Caco-2 (cell line): ENCODE measurements at regions of chr6 and their contacts with region 1.

Region 1: GRCh38 chr6:63458480-63459115 is 113.7 kb upstream of the LOC128125822 start:
- DNase-seq: peak in 1 of 2 experiments; percentile 70
- H3K4me3 ChIP-seq: no peak overlapping the region
- H3K4me3 Mint-ChIP-seq: peak overlapping the region; percentile 52
- H3K27ac Mint-ChIP-seq: peak overlapping the region; percentile 66
- H3K4me1 ChIP-seq: peaks cover 36% of the 10 kb centered on the region
- H3K4me1 Mint-ChIP-seq: peaks cover 22% of the 10 kb centered on the region
- H3K27me3 ChIP-seq: no peaks in the 10 kb centered on the region
- H3K27me3 Mint-ChIP-seq: no peaks in the 10 kb centered on the region
- CTCF ChIP-seq: no peak

Region 2: DNA sequence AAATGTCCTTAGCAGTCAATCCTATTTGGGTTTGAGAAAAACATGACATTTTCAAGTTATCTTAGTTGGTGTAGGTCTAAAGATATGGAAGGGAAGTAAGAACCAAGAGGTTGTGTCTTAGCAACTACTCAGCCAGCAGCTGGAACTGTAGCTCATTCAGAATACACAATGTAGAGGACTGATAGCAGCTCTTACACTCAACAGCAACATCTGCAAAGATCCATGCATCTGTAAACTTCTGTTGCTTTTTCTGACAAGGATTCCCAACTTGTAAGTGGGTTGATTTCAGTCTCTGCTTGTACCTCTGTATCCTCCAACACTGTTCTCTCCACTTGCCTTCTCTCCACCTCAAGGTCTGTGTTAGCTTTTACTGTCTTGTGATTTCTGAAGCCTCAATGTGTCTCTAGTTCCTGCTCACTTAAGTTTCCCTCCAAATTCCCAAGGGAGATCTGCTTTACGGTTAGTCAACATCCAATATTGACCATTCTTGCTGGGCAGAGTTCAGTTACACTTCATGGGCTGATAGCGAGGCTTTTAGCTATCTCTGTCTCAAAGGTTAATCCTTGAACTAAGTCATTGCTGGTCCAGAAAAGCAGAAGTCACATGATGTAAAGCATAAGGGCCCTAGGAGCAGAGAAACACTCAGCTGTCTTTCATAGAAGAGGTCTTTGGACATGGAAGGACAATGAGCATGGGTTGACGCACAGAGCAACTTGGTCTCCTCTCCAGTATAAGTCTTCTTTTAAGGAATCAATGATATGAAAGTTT is 67.2 kb before region 1 on chr6:
- CTCF ChIA-PET with region 1: no interaction called
- POLR2A ChIA-PET with region 1: no interaction called
- intact Hi-C with region 1: loop called (anchors 2 kb)
- DNase-seq: peak; percentile 82 to 83
- H3K4me3 ChIP-seq: no peak overlapping the region
- H3K4me3 Mint-ChIP-seq: peak overlapping the region; percentile 67
- H3K27ac Mint-ChIP-seq: peak overlapping the region; percentile 73
- H3K4me1 ChIP-seq: peaks cover 44% of the 10 kb centered on the region
- H3K4me1 Mint-ChIP-seq: peaks cover 31% of the 10 kb centered on the region
- H3K27me3 ChIP-seq: no peaks in the 10 kb centered on the region
- H3K27me3 Mint-ChIP-seq: no peaks in the 10 kb centered on the region
- CTCF ChIP-seq: no peak

Region 3: GRCh38 chr6:63426844-63427243 is 31.8 kb before region 1 on chr6:
- CTCF ChIA-PET with region 1: no interaction called
- POLR2A ChIA-PET with region 1: no interaction called
- intact Hi-C with region 1: no loop called
- DNase-seq: no peak
- H3K4me3 ChIP-seq: no peak overlapping the region
- H3K4me3 Mint-ChIP-seq: no peak overlapping the region
- H3K27ac Mint-ChIP-seq: no peak overlapping the region
- H3K4me1 ChIP-seq: no peaks in the 10 kb centered on the region
- H3K4me1 Mint-ChIP-seq: peaks cover 3% of the 10 kb centered on the region
- H3K27me3 ChIP-seq: no peaks in the 10 kb centered on the region
- H3K27me3 Mint-ChIP-seq: no peaks in the 10 kb centered on the region
- CTCF ChIP-seq: no peak

Region 4: DNA sequence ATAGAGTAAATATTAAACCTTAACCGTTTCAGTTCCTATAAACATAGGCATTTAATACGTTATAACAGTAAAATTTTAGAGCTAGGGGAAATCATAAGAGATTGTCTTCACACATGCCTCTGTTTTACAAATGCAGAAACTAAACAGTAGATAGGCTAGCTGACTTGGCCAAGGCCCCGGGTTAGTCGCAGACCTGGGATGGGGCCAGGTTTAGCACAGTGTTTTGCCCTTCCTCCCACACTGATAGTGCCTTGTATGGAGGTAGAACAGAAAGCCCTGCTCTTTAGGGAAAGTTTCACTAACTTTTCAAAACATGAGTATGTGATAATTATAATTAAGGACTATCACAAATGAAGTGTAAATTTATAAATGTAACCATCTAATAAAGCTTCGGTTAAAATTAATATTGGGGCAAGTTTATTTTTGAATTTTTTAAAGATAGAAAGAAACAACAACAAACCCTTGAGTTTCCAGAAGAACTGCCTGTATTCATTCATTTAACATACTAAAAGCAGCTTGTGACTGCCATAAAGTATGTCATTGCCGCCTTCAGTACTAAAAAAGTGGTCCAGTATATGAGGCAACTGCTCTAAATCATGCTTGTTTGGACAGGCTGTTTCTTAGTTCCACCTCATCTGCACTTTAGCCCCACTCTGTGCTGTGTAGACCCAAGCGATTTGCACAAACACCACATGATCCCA is 51.2 kb after region 1 on chr6:
- CTCF ChIA-PET with region 1: no interaction called
- POLR2A ChIA-PET with region 1: no interaction called
- intact Hi-C with region 1: loop called (anchors 2 kb)
- DNase-seq: peak; percentile 72 to 78
- H3K4me3 ChIP-seq: no peak overlapping the region
- H3K4me3 Mint-ChIP-seq: no peak overlapping the region
- H3K27ac Mint-ChIP-seq: no peak overlapping the region
- H3K4me1 ChIP-seq: peaks cover 33% of the 10 kb centered on the region
- H3K4me1 Mint-ChIP-seq: peaks cover 6% of the 10 kb centered on the region
- H3K27me3 ChIP-seq: no peaks in the 10 kb centered on the region
- H3K27me3 Mint-ChIP-seq: no peaks in the 10 kb centered on the region
- CTCF ChIP-seq: no peak

Region 5: DNA sequence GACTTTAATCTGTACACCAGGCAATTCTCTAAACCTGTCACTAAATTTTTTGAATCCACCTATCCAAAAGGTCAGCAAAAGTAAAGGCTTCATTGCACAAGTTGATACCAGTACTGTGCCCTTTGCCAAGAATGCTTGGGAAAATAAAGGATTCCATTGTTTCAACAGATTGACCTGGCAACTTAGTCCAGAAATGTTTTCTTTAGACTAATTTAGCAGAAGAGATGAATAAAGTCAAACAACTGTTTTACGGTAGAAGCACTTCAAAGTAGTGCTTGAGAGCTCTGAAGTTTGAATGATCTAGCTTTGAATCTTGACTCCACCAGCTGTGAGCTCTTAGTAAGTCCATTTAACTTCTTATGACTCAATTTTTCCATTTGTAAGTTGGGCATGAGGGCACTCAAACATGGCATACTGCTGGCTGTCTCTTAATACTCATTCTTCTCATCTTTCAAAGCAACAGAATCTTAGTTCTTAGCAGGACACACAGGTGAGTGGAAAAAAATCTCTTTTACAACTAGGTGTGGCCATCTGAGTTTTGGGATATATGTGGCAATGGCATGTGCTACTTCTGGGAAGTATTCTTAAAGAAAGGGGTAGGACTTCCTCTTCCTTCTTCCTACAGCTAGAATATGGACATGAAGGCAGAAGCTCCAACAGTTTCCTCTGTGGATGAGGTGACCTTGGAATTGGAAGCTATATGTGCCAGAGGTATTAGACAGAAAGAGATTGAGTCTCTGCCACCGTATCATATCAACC is 57.8 kb after region 1 on chr6:
- CTCF ChIA-PET with region 1: no interaction called
- POLR2A ChIA-PET with region 1: no interaction called
- intact Hi-C with region 1: loop called (anchors 1 kb)
- DNase-seq: peak in 1 of 2 experiments; percentile 21
- H3K4me3 ChIP-seq: no peak overlapping the region
- H3K4me3 Mint-ChIP-seq: no peak overlapping the region
- H3K27ac Mint-ChIP-seq: no peak overlapping the region
- H3K4me1 ChIP-seq: peaks cover 60% of the 10 kb centered on the region
- H3K4me1 Mint-ChIP-seq: peaks cover 23% of the 10 kb centered on the region
- H3K27me3 ChIP-seq: no peaks in the 10 kb centered on the region
- H3K27me3 Mint-ChIP-seq: no peaks in the 10 kb centered on the region
- CTCF ChIP-seq: no peak